GM18951 (cell line): ENCODE measurements at regions of chr6 and their contacts with region 1.

Region 1: DNA sequence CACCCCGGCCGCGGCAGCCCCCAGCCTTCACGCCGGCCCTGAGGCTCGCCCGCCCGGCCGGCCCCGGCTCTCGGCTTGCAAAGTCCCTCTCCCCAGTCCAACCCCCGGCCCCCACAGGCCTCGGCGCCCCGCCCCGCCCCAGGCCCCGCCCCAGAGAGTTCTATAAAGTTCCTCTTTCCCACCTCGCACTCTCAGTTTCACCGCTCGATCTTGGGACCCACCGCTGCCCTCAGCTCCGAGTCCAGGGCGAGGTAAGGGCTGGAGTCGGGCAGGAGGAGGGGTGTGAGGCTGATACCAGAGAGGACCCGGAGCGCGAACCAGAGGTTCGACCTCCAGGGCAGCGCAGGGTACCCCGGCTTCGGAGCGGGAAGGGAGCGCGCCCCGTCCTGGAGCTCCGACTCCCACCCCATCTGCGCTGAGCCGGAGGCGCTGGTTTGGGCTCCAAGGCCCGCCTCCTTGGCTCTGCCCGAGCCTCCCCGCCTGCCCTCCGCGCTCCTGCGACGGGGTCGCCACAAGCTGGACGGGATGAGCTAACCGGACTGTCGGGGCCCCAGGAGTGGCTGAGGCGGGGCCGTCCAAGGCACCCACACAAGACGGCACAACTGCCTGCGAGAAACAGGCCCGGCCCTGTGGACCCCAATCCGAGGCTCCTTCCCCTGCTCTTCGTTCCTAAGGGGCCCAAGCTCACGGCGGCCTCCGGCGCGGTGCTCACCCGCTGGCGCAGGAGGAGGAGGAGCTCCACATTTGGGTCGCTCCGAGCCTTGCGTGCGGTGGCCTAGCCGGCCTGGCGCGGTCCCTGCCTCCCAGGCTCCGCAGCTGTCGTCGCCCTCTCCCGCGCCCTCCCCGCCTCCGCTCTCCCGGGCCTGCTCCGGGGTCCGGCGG is at the start of gene IRF4:
- POLR2A ChIP-seq: peak; percentile 100

Region 2: DNA sequence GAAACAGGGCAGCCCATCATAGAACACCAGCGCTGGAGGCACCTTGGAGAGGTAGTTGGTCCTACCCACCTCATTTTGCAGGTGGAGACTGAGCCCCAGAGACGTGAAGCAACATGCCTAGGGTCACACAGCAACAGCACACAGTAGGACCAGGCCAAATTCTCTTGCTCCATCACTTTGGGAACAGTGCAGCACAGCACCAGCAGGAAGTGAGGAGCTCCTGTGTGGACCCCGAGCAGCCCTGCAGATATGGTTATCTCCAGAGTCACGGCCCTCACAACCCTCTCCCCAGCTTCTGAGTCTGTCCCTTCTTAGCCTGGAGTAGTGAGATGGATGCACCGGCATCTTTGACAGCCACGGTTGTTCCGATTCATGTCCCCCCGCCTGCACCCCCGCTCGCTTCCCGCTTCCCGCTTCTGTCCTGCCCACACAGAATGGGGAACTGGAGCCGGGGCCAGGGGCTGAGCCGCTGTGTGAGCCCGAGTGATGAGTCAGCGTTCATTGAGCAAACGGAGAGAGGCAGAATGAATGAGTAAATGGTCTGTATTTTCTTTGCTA is 172.1 kb before region 1 on chr6:
- in situ Hi-C with region 1: loop called (anchors 10 kb)
- POLR2A ChIP-seq: no peak